CD4-positive, alpha-beta T cell (primary cell): ENCODE measurements at regions of chr17 and their contacts with region 1.

Region 1: GRCh38 chr17:8189711-8190477 is at the start of gene BORCS6:
- DNase-seq: peak; percentile 84 to 99 (median 92)
- ATAC-seq: peak; percentile 68
- H3K4me3 ChIP-seq: peak within 1 kb of the TSS; percentile 93
- H3K4me3 Mint-ChIP-seq: no peak within 1 kb of the TSS
- H3K27ac ChIP-seq: peak within 1 kb of the TSS; percentile 83
- H3K27ac Mint-ChIP-seq: peak within 1 kb of the TSS; percentile 85
- H3K4me1 ChIP-seq: peaks cover 77% of the 10 kb centered on the region
- H3K4me1 Mint-ChIP-seq: peaks cover 12% of the 10 kb centered on the region
- H3K27me3 ChIP-seq: no peaks in the 10 kb centered on the region
- H3K27me3 Mint-ChIP-seq: no peaks in the 10 kb centered on the region
- CTCF ChIP-seq: no peak
- total RNA-seq, gene BORCS6: 6.1 to 6.4 TPM

Region 2: GRCh38 chr17:7763919-7764318 is 426.0 kb before region 1 on chr17:
- CTCF ChIA-PET with region 1: no interaction called
- POLR2A ChIA-PET with region 1: no interaction called
- intact Hi-C with region 1: no loop called
- DNase-seq: no peak
- ATAC-seq: no peak
- H3K4me3 ChIP-seq: no peak overlapping the region
- H3K4me3 Mint-ChIP-seq: no peak overlapping the region
- H3K27ac ChIP-seq: no peak overlapping the region
- H3K27ac Mint-ChIP-seq: no peak overlapping the region
- H3K4me1 ChIP-seq: no peaks in the 10 kb centered on the region
- H3K4me1 Mint-ChIP-seq: no peaks in the 10 kb centered on the region
- H3K27me3 ChIP-seq: no peaks in the 10 kb centered on the region
- H3K27me3 Mint-ChIP-seq: peaks cover 15% of the 10 kb centered on the region
- CTCF ChIP-seq: no peak

Region 3: GRCh38 chr17:8066841-8067775 is 122.8 kb before region 1 on chr17:
- CTCF ChIA-PET with region 1: no interaction called
- POLR2A ChIA-PET with region 1: no interaction called
- intact Hi-C with region 1: no loop called
- DNase-seq: no peak
- ATAC-seq: no peak
- H3K4me3 ChIP-seq: no peak overlapping the region
- H3K4me3 Mint-ChIP-seq: no peak overlapping the region
- H3K27ac ChIP-seq: no peak overlapping the region
- H3K27ac Mint-ChIP-seq: no peak overlapping the region
- H3K4me1 ChIP-seq: peaks cover 2% of the 10 kb centered on the region
- H3K4me1 Mint-ChIP-seq: no peaks in the 10 kb centered on the region
- H3K27me3 ChIP-seq: peaks cover 31 to 37% of the 10 kb centered on the region in 2 experiments
- H3K27me3 Mint-ChIP-seq: peaks cover 47% of the 10 kb centered on the region
- CTCF ChIP-seq: no peak

Region 4: GRCh38 chr17:8151123-8151640 is 38.7 kb before region 1 on chr17:
- CTCF ChIA-PET with region 1: interaction called, 12 read pairs
- POLR2A ChIA-PET with region 1: interaction called, 233 read pairs
- intact Hi-C with region 1: no loop called
- DNase-seq: peak; percentile 82 to 96 (median 90)
- ATAC-seq: peak; percentile 43
- H3K4me3 ChIP-seq: peak overlapping the region; percentile 75
- H3K4me3 Mint-ChIP-seq: peak overlapping the region; percentile 95
- H3K27ac ChIP-seq: peak overlapping the region; percentile 99 to 100
- H3K27ac Mint-ChIP-seq: no peak overlapping the region
- H3K4me1 ChIP-seq: peaks cover 85% of the 10 kb centered on the region
- H3K4me1 Mint-ChIP-seq: peaks cover 51% of the 10 kb centered on the region
- H3K27me3 ChIP-seq: no peaks in the 10 kb centered on the region
- H3K27me3 Mint-ChIP-seq: peaks cover 4% of the 10 kb centered on the region
- CTCF ChIP-seq: no peak

Region 5: GRCh38 chr17:8173056-8173870 is 16.6 kb before region 1 on chr17:
- CTCF ChIA-PET with region 1: interaction called, 7 read pairs
- POLR2A ChIA-PET with region 1: interaction called, 153 read pairs
- intact Hi-C with region 1: loop called in 1 of 2 experiments (anchors 1 kb)
- DNase-seq: peak in 13 of 14 experiments; percentile 56 to 95 (median 70)
- ATAC-seq: peak; percentile 81
- H3K4me3 ChIP-seq: peak overlapping the region; percentile 49
- H3K4me3 Mint-ChIP-seq: peak overlapping the region; percentile 90
- H3K27ac ChIP-seq: peak overlapping the region; percentile 95 to 98
- H3K27ac Mint-ChIP-seq: peak overlapping the region; percentile 99
- H3K4me1 ChIP-seq: peaks cover 48% of the 10 kb centered on the region
- H3K4me1 Mint-ChIP-seq: peaks cover 51% of the 10 kb centered on the region
- H3K27me3 ChIP-seq: no peaks in the 10 kb centered on the region
- H3K27me3 Mint-ChIP-seq: no peaks in the 10 kb centered on the region
- CTCF ChIP-seq: no peak

Region 6: DNA sequence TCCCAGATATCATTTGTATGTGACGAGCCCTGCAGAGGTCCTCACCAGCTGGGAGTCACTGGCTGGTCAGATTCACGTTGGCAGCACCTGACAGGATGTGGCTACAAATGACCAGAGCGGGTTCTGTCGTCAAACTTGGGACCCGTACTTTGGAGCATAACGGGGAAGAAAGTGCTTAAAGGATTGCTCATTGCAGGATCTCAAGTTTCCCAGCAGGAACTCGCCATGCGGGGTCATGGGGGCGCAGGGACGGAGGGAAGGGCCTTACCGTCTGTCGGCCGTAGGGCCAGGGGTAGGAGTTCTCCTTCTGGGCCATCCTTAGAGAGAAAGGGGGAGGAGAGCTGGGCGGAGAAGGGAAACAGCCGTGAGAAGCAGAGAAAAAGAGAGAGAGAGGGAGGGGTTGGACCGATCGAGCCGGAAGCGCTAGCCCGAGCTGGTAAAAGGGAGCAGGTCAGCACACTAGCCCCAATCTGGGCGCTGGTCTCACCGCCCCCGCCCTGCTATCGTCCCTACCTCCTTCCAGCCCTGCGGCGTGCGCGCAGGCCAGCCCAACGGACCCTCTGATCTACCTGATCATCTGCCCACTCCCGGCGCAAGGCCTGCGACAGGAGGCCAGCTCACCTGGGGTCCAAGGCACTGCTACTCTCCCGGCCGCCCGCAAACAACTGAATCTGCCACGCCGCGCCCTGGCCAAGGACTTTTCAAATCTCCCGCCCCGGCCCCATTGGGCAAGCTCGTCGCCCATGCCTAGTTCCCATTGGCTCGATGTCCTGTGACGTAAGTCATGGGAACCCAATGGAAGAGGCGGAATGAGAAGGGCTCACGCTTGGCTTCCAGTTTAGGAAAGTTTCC is 20.2 kb after region 1 on chr17 and contains the start of gene AURKB:
- CTCF ChIA-PET with region 1: interaction called, 3 read pairs
- POLR2A ChIA-PET with region 1: interaction called, 20 read pairs
- intact Hi-C with region 1: no loop called
- DNase-seq: peak; percentile 84 to 97 (median 90)
- ATAC-seq: peak; percentile 100
- H3K4me3 ChIP-seq: peak within 1 kb of the TSS; percentile 76
- H3K4me3 Mint-ChIP-seq: peak within 1 kb of the TSS; percentile 90
- H3K27ac ChIP-seq: peak within 1 kb of the TSS; percentile 40 to 50
- H3K27ac Mint-ChIP-seq: peak within 1 kb of the TSS; percentile 27
- H3K4me1 ChIP-seq: peaks cover 16% of the 10 kb centered on the region
- H3K4me1 Mint-ChIP-seq: peaks cover 19% of the 10 kb centered on the region
- H3K27me3 ChIP-seq: no peaks in the 10 kb centered on the region
- H3K27me3 Mint-ChIP-seq: no peaks in the 10 kb centered on the region
- CTCF ChIP-seq: no peak
- total RNA-seq, gene AURKB: 0.56 to 1.4 TPM

Region 7: GRCh38 chr17:8294814-8295316 is 105.0 kb after region 1 on chr17:
- CTCF ChIA-PET with region 1: no interaction called
- POLR2A ChIA-PET with region 1: interaction called, 13 read pairs
- intact Hi-C with region 1: no loop called
- DNase-seq: no peak
- ATAC-seq: no peak
- H3K4me3 ChIP-seq: peak overlapping the region; percentile 72
- H3K4me3 Mint-ChIP-seq: peak overlapping the region; percentile 95
- H3K27ac ChIP-seq: peak overlapping the region; percentile 48 to 73
- H3K27ac Mint-ChIP-seq: peak overlapping the region; percentile 79
- H3K4me1 ChIP-seq: peaks cover 26% of the 10 kb centered on the region
- H3K4me1 Mint-ChIP-seq: peaks cover 39% of the 10 kb centered on the region
- H3K27me3 ChIP-seq: no peaks in the 10 kb centered on the region
- H3K27me3 Mint-ChIP-seq: no peaks in the 10 kb centered on the region
- CTCF ChIP-seq: no peak

Region 8: GRCh38 chr17:8376271-8377067 is 186.6 kb after region 1 on chr17 and contains the start of gene KRABD2:
- CTCF ChIA-PET with region 1: no interaction called
- POLR2A ChIA-PET with region 1: no interaction called
- intact Hi-C with region 1: no loop called
- DNase-seq: peak; percentile 82 to 93 (median 87)
- ATAC-seq: peak; percentile 99
- H3K4me3 ChIP-seq: peak within 1 kb of the TSS; percentile 98
- H3K4me3 Mint-ChIP-seq: peak within 1 kb of the TSS; percentile 86
- H3K27ac ChIP-seq: peak within 1 kb of the TSS; percentile 55 to 75
- H3K27ac Mint-ChIP-seq: peak within 1 kb of the TSS; percentile 86
- H3K4me1 ChIP-seq: peaks cover 43% of the 10 kb centered on the region
- H3K4me1 Mint-ChIP-seq: peaks cover 53% of the 10 kb centered on the region
- H3K27me3 ChIP-seq: no peaks in the 10 kb centered on the region
- H3K27me3 Mint-ChIP-seq: no peaks in the 10 kb centered on the region
- CTCF ChIP-seq: peak; percentile 65